IMR-90 (cell line): ENCODE measurements at regions of chr11 and their contacts with region 1.

Region 1: GRCh38 chr11:117239300-117239699 is 6.8 kb downstream of the RNF214 start:
- DNase-seq: peak; percentile 96
- ATAC-seq: peak; percentile 99
- H3K4me3 ChIP-seq: no peak overlapping the region
- H3K27ac ChIP-seq: no peak overlapping the region
- H3K4me1 ChIP-seq: peaks cover 4% of the 10 kb centered on the region; the same call in 1 of the 2 replicates
- H3K27me3 ChIP-seq: no peaks in the 10 kb centered on the region
- CTCF ChIP-seq: peak; percentile 69
- POLR2A ChIP-seq: no peak
- RAD21 ChIP-seq: peak; percentile 72

Region 2: GRCh38 chr11:117281159-117281558 is 41.9 kb after region 1 on chr11:
- CTCF ChIA-PET with region 1: no interaction called
- POLR2A ChIA-PET with region 1: no interaction called
- dilution Hi-C with region 1: no loop called
- in situ Hi-C with region 1: no loop called
- intact Hi-C with region 1: loop called (anchors 2 kb)
- DNase-seq: peak; percentile 99
- ATAC-seq: peak; percentile 89
- H3K4me3 ChIP-seq: no peak overlapping the region
- H3K27ac ChIP-seq: peak overlapping the region; percentile 86
- H3K4me1 ChIP-seq: peaks cover 13% of the 10 kb centered on the region
- H3K27me3 ChIP-seq: no peaks in the 10 kb centered on the region
- CTCF ChIP-seq: no peak
- POLR2A ChIP-seq: no peak
- RAD21 ChIP-seq: no peak

Region 3: DNA sequence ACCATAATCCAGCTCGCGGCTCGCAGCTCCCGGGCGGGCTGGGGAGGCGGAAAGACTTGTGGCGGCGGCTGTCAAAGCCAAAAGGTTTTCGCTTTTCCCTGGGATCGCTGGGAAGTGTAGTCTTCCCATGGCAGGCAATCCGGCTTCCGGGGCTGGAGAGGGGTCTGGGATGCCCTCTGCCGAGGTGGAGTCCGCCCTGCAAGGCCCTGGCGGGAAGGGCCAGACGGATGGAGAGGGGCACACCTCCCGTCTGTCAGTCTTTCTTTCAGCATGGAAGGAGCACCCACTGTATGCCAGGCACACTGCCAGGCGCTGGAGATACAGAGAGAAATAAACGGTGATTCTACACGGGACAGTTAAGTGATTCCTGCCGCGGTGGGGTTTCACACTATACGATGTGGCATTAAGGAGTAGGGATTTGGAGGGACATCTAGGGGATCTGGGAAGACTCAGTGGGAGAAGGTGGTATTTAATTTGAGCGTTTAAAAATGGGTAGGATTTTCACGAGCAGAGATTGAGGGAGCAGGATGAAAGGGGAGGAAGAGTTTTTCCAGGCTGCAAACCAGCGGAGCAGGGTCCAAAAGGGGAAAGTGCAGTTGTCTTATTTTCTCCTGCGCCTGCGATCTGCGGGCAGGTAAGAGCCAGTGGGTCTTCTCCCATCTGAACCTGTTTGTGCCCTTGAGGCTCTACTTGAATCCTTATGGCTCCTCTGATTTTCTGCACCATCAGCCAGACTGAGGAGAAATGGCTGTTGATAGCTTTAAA is 77.1 kb after region 1 on chr11 and contains the start of gene BACE1:
- CTCF ChIA-PET with region 1: no interaction called
- POLR2A ChIA-PET with region 1: no interaction called
- dilution Hi-C with region 1: no loop called
- in situ Hi-C with region 1: loop called (anchors 5 kb)
- intact Hi-C with region 1: loop called (anchors 1 kb)
- DNase-seq: peak; percentile 80
- ATAC-seq: peak; percentile 94
- H3K4me3 ChIP-seq: peak within 1 kb of the TSS; percentile 56
- H3K27ac ChIP-seq: peak within 1 kb of the TSS; percentile 73
- H3K4me1 ChIP-seq: peaks cover 11% of the 10 kb centered on the region
- H3K27me3 ChIP-seq: no peaks in the 10 kb centered on the region
- CTCF ChIP-seq: peak; percentile 58
- POLR2A ChIP-seq: no peak
- RAD21 ChIP-seq: peak; percentile 61
- total RNA-seq, gene BACE1: 27.6 and 29.2 TPM in 2 replicates